HEK293T (cell line): ENCODE measurements at regions of chr3 and their contacts with region 1.

Region 1: GRCh38 chr3:101195951-101196713 is 124.2 kb downstream of the IMPG2 start:
- DNase-seq: peak; percentile 46

Region 2: GRCh38 chr3:101069901-101070798 is 126.0 kb before region 1 on chr3:
- CTCF ChIA-PET with region 1: interaction called, 12 read pairs
- POLR2A ChIA-PET with region 1: no interaction called
- DNase-seq: peak; percentile 81

Region 3: GRCh38 chr3:101081999-101082398 is 114.1 kb before region 1 on chr3:
- CTCF ChIA-PET with region 1: no interaction called
- POLR2A ChIA-PET with region 1: no interaction called
- DNase-seq: no peak